A673 (cell line): ENCODE measurements at regions of chr13 and their contacts with region 1.

Region 1: DNA sequence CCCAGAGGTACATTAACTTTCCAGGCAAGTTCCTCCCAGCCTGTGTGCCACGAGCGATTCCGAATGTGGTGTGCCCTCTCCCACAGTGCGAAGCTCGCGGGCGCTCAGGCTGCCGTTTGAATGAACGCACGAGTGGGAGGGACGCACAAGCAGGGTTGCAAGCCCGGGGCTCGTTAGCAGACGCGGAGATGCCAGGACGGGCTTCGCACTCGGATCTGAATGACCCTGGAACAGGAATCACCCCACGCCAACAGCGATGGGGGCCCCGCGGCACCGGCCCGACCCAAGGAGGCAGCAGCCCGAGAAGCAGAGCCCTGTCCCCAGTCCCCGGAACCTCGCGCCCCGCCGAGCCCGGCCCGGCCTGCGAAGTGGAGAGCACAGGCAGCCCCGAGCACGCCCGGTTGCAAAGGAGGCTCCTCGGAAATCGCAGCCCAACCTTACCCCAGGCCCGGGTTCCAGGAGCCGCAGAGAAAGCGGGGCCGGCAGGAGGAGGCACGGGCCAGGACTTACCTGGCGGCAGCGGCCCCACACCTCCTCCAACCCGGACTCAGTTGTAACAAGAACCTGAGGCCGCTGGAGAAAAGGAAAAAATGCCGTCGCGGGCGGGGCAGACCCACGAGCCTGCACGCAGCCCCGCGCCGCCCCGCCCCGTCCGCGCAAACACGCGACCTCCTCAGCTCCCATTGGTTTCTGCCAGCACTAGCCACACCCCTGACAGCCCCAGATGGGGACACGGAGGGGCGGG is at the start of gene SLC25A30:
- DNase-seq: peak; percentile 98
- H3K4me3 ChIP-seq: peak within 1 kb of the TSS; percentile 93
- H3K27ac ChIP-seq: peak within 1 kb of the TSS; percentile 81
- H3K4me1 ChIP-seq: peaks cover 11% of the 10 kb centered on the region
- H3K27me3 ChIP-seq: no peaks in the 10 kb centered on the region
- CTCF ChIP-seq: no peak
- total RNA-seq, gene SLC25A30: 23.3 and 26.0 TPM in 2 replicates

Region 2: DNA sequence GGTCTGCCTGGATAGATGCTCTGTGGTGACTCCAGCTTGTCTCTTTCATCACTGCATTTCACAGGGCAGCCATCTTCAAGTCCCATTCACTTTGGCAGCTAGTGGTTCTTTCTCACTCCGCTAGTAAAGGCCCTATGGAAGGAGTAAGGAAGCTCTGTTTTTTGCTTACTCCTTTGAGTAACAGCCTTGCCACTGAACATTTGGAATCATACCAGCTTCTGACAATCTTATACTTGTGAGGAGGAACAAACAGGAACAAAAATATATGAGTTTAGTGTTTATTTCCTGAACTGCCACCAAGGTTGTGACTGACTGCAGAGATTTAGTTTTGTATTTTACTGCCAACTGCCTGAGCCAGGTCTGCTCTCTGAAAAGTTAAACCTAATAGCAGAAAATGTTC is 255.8 kb before region 1 on chr13:
- CTCF ChIA-PET with region 1: no interaction called
- POLR2A ChIA-PET with region 1: no interaction called
- intact Hi-C with region 1: no loop called
- DNase-seq: no peak
- H3K4me3 ChIP-seq: no peak overlapping the region
- H3K27ac ChIP-seq: no peak overlapping the region
- H3K4me1 ChIP-seq: no peaks in the 10 kb centered on the region
- H3K27me3 ChIP-seq: no peaks in the 10 kb centered on the region
- CTCF ChIP-seq: no peak

Region 3: GRCh38 chr13:45464687-45465453 is 46.9 kb after region 1 on chr13 and contains the start of gene COG3:
- CTCF ChIA-PET with region 1: interaction called, 4 read pairs
- POLR2A ChIA-PET with region 1: no interaction called
- intact Hi-C with region 1: loop called (anchors 2 kb)
- DNase-seq: peak; percentile 98
- H3K4me3 ChIP-seq: peak within 1 kb of the TSS; percentile 80
- H3K27ac ChIP-seq: peak within 1 kb of the TSS; percentile 80
- H3K4me1 ChIP-seq: peaks cover 27% of the 10 kb centered on the region
- H3K27me3 ChIP-seq: no peaks in the 10 kb centered on the region
- CTCF ChIP-seq: peak; percentile 19
- total RNA-seq, gene COG3: 20.3 and 24.3 TPM in 2 replicates

Region 4: GRCh38 chr13:45554604-45555109 is 136.7 kb after region 1 on chr13:
- CTCF ChIA-PET with region 1: no interaction called
- POLR2A ChIA-PET with region 1: interaction called, 14 read pairs
- intact Hi-C with region 1: no loop called
- DNase-seq: no peak
- H3K4me3 ChIP-seq: no peak overlapping the region
- H3K27ac ChIP-seq: no peak overlapping the region
- H3K4me1 ChIP-seq: no peaks in the 10 kb centered on the region
- H3K27me3 ChIP-seq: no peaks in the 10 kb centered on the region
- CTCF ChIP-seq: no peak